ENCODE measurements at regions of chr7 and their contacts with region 1.

Region 1: DNA sequence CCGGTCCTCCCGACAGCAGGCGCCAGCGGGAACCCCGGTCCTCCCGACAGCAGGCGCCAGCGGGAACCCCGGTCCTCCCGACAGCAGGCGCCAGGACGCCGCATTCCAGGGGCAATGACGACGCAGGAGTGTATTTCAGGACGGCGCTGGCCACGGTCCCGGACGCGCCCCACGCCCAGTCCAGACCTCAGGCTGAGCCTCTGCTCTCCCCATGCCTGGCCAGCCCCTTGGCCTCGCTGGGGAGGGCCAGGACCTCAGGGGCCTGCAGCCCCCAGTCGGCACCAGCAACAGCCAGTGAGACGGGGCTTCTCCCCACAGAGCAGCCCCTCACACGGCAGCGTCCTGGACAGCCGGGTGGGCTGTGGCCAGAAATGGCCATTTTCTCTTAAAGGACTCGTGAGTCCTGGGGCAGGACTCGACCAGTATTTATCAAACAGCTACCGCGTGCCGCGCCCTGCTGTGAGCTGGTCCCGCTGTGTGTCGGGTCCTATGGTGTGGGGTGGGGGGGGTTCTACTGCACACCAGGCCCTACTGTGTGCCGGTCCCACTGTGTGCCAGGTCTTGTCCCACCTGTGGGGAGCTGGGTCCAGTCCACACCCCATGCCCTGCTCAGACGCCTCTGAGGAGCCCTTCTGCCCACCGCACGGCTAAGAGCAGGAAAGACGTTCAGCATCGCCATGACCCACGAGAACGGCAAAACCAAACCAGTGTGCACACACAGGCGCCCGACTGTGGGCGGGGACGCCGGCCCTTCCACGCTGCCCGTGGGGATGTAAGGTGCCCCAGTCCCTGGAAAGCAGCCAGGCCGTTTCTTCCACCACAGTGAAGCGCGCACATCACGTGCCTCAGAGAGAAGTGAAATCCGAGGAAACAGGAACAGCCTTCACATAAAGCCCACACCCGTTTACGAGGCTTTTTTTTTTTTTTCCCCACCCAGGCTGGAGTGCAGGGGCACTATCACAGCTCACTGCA is 33.3 kb downstream of the GET4 start:
- DNase-seq: peak in 1 of 2 donors; percentile 51
- ATAC-seq: peak in 1 of 3 donors; percentile 28
- H3K4me3 ChIP-seq: peak overlapping the region; percentile 17
- H3K4me3 Mint-ChIP-seq: peak overlapping the region; percentile 75
- H3K27ac ChIP-seq: no peak overlapping the region
- H3K27ac Mint-ChIP-seq: peak overlapping the region; percentile 54 to 60
- H3K4me1 ChIP-seq: peaks cover 46% of the 10 kb centered on the region
- H3K4me1 Mint-ChIP-seq: peaks cover 8 to 46% of the 10 kb centered on the region in 2 donors
- H3K27me3 ChIP-seq: no peaks in the 10 kb centered on the region
- H3K27me3 Mint-ChIP-seq: no peaks in the 10 kb centered on the region
- CTCF ChIP-seq: peak; percentile 60

Region 2: GRCh38 chr7:531777-532176 is 377.9 kb before region 1 on chr7:
- intact Hi-C with region 1: no loop called
- DNase-seq: no peak
- ATAC-seq: peak; percentile 29 to 78 (median 76)
- H3K4me3 ChIP-seq: no peak overlapping the region
- H3K4me3 Mint-ChIP-seq: no peak overlapping the region
- H3K27ac ChIP-seq: no peak overlapping the region
- H3K27ac Mint-ChIP-seq: peak overlapping the region in 1 of 2 donors; percentile 29
- H3K4me1 ChIP-seq: peaks cover 5% of the 10 kb centered on the region
- H3K4me1 Mint-ChIP-seq: no peaks in the 10 kb centered on the region
- H3K27me3 ChIP-seq: no peaks in the 10 kb centered on the region
- H3K27me3 Mint-ChIP-seq: peaks cover 0 to 3% of the 10 kb centered on the region in 2 donors
- CTCF ChIP-seq: no peak

Region 3: GRCh38 chr7:954330-955238 is 44.9 kb after region 1 on chr7 and contains the start of gene ADAP1:
- intact Hi-C with region 1: loop called (anchors 1 kb)
- DNase-seq: peak; percentile 69 to 83
- ATAC-seq: peak; percentile 83 to 84 (median 83)
- H3K4me3 ChIP-seq: peak within 1 kb of the TSS; percentile 33
- H3K4me3 Mint-ChIP-seq: peak within 1 kb of the TSS; percentile 84
- H3K27ac ChIP-seq: peak within 1 kb of the TSS; percentile 41
- H3K27ac Mint-ChIP-seq: peak within 1 kb of the TSS; percentile 26 to 65
- H3K4me1 ChIP-seq: peaks cover 56% of the 10 kb centered on the region
- H3K4me1 Mint-ChIP-seq: peaks cover 11 to 20% of the 10 kb centered on the region in 2 donors
- H3K27me3 ChIP-seq: no peaks in the 10 kb centered on the region
- H3K27me3 Mint-ChIP-seq: no peaks in the 10 kb centered on the region
- CTCF ChIP-seq: peak; percentile 33
- total RNA-seq, gene ADAP1: 87.2 to 117 (median 89.2) TPM

Region 4: DNA sequence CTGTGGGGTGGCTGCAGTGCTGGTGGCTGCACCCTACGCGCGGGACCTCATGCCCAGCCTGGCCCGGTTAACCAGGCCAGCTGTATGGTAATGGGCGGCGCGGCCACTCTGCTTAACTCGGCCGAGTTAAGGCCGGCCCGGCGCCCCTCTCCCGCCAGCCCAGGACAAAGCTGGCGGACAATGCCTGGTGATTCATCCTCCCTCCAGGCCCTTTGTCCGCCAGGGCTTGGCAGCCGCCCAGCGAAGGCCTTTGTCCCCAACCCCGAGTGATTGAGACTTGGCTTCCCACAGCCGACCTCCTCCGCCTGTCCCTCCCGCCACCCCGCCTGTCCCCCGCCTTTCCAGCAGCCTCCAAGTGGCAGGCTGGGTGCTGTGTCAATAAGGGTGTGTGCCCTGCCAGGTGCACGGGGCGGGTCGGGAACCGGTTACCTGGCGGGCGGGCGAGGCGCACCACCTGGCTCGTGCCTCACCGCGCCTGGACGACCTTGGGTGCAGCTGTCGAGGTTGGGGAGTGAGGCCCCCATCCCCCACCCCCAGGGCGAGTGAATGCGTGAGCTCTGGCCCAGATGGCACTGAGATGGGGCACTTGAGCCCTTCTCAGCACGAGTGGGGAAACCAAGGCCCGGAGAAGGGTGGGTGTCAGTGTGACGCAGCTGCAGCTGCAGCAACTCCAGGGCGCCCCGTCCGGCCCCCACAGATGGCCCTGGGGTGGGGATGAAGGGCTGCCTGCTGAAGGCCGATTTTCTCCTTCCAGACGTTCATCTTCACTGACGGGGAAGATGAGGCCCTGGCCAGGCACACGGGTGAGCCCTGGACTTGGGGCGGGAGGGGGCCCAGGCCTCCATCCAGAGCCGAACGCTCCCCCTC is 1614.5 kb after region 1 on chr7:
- intact Hi-C with region 1: loop called (anchors 5 kb)
- DNase-seq: peak in 1 of 2 donors; percentile 34
- ATAC-seq: no peak
- H3K4me3 ChIP-seq: no peak overlapping the region
- H3K4me3 Mint-ChIP-seq: peak overlapping the region; percentile 92
- H3K27ac ChIP-seq: peak overlapping the region; percentile 41
- H3K27ac Mint-ChIP-seq: peak overlapping the region; percentile 94 to 97
- H3K4me1 ChIP-seq: peaks cover 80% of the 10 kb centered on the region
- H3K4me1 Mint-ChIP-seq: peaks cover 36 to 52% of the 10 kb centered on the region in 2 donors
- H3K27me3 ChIP-seq: no peaks in the 10 kb centered on the region
- H3K27me3 Mint-ChIP-seq: no peaks in the 10 kb centered on the region
- CTCF ChIP-seq: no peak

Measured in natural killer cell (primary cell).